ENCODE measurements at regions of chr4 and their contacts with region 1.

Region 1: GRCh38 chr4:37686373-37687193 is at the start of gene RELL1:
- DNase-seq: peak; percentile 98 to 99 (median 98)
- H3K4me3 ChIP-seq: peak within 1 kb of the TSS; percentile 18 to 72
- H3K4me3 Mint-ChIP-seq: peak within 1 kb of the TSS; percentile 91 to 98 (median 95)
- H3K27ac ChIP-seq: peak within 1 kb of the TSS; percentile 91
- H3K27ac Mint-ChIP-seq: peak within 1 kb of the TSS; percentile 97 to 99 (median 98)
- H3K4me1 ChIP-seq: peaks cover 41% of the 10 kb centered on the region
- H3K4me1 Mint-ChIP-seq: peaks cover 26 to 47% (median 35%) of the 10 kb centered on the region in 4 donors
- H3K27me3 ChIP-seq: no peaks in the 10 kb centered on the region
- H3K27me3 Mint-ChIP-seq: no peaks in the 10 kb centered on the region
- total RNA-seq, gene RELL1: 34.9 to 36.9 TPM

Region 2: DNA sequence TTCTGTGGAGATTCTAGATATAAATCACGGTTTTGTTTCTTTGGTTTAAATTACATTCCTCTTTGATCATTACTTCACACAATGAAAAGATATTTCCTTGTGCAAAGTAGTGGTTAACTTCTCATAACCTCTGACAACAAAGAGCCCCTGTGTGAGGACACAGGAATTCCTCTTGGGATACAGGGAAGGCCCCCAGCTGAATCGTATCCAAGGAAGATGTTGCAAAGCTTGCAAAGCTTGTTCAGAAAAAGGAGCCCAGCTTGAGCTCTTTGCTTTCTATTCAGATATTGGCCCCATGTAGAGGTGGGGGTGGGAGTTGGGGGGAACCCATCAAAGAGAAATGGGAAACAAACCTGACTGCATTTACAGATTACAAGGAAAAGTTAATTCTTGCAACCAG is 146.1 kb before region 1 on chr4:
- CTCF ChIA-PET with region 1: no interaction called
- POLR2A ChIA-PET with region 1: no interaction called
- intact Hi-C with region 1: no loop called
- DNase-seq: no peak
- H3K4me3 ChIP-seq: no peak overlapping the region
- H3K4me3 Mint-ChIP-seq: no peak overlapping the region
- H3K27ac ChIP-seq: no peak overlapping the region
- H3K27ac Mint-ChIP-seq: no peak overlapping the region
- H3K4me1 ChIP-seq: no peaks in the 10 kb centered on the region
- H3K4me1 Mint-ChIP-seq: no peaks in the 10 kb centered on the region
- H3K27me3 ChIP-seq: no peaks in the 10 kb centered on the region
- H3K27me3 Mint-ChIP-seq: peaks cover 0 to 2% of the 10 kb centered on the region in 2 donors

Region 3: DNA sequence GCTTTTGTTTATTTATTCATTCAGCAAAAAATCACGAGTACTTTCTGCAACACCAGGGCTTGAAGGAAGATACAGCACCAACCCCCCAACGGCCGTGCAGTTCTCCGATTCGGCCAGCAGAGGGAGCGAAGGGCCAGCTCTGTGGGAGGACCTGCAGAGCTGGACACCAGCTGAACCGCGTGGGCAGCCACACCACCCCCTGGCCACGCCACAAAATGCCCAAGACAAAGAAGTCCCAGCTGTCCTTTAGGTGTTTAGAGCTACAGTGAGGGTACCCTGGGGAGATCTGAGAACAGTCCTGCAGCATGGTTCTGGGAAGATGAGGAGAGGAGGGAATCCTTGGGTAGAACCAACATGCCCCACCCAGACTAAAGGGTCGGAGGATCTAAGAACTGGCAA is 83.5 kb before region 1 on chr4:
- CTCF ChIA-PET with region 1: interaction called, 6 read pairs
- POLR2A ChIA-PET with region 1: no interaction called
- intact Hi-C with region 1: loop called (anchors 2 kb)
- DNase-seq: peak; percentile 54 to 69 (median 58)
- H3K4me3 ChIP-seq: no peak overlapping the region
- H3K4me3 Mint-ChIP-seq: peak overlapping the region in 1 of 8 donors; percentile 23
- H3K27ac ChIP-seq: no peak overlapping the region
- H3K27ac Mint-ChIP-seq: peak overlapping the region in 3 of 7 donors; percentile 63 to 77 (median 73)
- H3K4me1 ChIP-seq: peaks cover 4% of the 10 kb centered on the region
- H3K4me1 Mint-ChIP-seq: peaks cover 4 to 11% (median 6%) of the 10 kb centered on the region in 4 donors
- H3K27me3 ChIP-seq: no peaks in the 10 kb centered on the region
- H3K27me3 Mint-ChIP-seq: no peaks in the 10 kb centered on the region

Region 4: DNA sequence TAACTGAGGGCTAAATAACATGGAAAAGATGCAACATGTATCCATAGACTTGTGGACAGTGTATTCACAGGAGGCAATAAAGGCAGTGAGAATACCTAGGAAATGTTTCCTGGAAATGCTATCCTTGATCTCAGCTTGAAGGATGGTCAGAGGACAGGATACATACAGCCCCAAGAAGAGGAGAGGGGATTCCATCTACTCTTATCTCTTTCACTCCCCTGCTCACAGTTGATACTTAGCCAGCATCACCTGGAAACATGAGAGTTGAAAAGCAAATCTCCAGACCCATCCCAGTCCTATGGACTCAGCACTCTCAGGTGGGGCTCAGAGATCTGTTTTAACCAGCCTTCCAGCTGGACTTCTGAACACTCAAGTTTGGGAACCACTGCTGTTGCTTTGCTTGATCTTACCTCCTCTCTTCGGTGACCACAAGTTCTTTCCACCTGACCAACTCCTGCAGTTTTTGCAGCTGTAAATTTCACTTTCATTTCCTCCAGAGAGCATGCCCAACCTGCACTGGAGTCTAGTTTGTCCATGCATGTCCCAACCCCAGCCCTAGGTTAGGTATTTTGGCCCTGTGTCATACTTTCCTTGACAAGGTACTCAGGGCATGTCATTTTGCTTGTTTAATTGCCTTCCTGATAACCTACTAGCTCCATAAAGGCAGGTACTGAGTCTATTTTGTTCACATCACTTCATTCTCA is 10.8 kb before region 1 on chr4:
- CTCF ChIA-PET with region 1: interaction called, 3 read pairs
- POLR2A ChIA-PET with region 1: interaction called, 6 read pairs
- intact Hi-C with region 1: loop called (anchors 1 kb)
- DNase-seq: peak in 3 of 5 donors; percentile 12 to 39 (median 23)
- H3K4me3 ChIP-seq: no peak overlapping the region
- H3K4me3 Mint-ChIP-seq: peak overlapping the region; percentile 21 to 92 (median 66)
- H3K27ac ChIP-seq: no peak overlapping the region
- H3K27ac Mint-ChIP-seq: peak overlapping the region in 4 of 7 donors; percentile 19 to 79 (median 44)
- H3K4me1 ChIP-seq: peaks cover 33% of the 10 kb centered on the region
- H3K4me1 Mint-ChIP-seq: peaks cover 37 to 78% (median 60%) of the 10 kb centered on the region in 4 donors
- H3K27me3 ChIP-seq: no peaks in the 10 kb centered on the region
- H3K27me3 Mint-ChIP-seq: no peaks in the 10 kb centered on the region

Region 5: DNA sequence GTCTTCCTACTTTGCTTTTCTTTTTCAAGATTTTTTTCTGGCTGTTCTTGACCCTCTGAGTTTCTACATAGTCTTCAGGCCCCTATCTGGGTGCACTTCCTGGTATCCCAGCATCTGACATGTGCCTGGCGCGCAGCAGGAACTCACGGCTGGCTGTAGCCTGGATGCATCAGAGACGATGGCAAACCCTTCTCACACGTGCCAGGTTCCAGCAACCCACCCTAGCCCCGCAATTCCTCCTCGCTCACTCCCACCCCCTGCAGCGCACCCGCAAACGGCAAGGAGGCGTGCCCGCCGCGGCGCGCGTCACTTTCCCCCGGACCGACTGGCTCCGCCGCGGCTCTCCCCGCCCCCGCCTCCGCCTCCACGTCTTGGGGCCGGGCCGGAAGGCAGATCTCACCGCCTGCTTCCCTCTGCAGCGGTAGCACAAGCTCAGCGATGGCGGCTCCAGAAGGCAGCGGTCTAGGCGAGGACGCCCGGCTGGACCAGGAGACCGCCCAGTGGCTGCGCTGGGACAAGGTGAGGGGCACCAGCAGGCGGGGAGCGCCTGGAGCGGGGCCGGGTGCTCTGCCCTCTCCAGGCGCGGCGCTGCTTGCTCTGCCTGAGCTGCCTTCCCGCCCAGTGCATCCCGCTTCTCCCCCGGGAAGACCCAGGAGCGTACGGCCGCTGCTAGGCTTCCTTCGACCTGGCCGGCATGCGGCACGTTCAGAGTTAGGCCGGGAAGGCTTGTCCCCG is 139.9 kb after region 1 on chr4 and contains the start of gene PGM2:
- CTCF ChIA-PET with region 1: interaction called, 4 read pairs
- POLR2A ChIA-PET with region 1: no interaction called
- intact Hi-C with region 1: loop called (anchors 1 kb)
- DNase-seq: peak; percentile 86 to 90 (median 88)
- H3K4me3 ChIP-seq: peak within 1 kb of the TSS; percentile 97 to 98
- H3K4me3 Mint-ChIP-seq: peak within 1 kb of the TSS; percentile 93 to 99 (median 97)
- H3K27ac ChIP-seq: peak within 1 kb of the TSS; percentile 69
- H3K27ac Mint-ChIP-seq: peak within 1 kb of the TSS; percentile 66 to 99 (median 96)
- H3K4me1 ChIP-seq: peaks cover 23% of the 10 kb centered on the region
- H3K4me1 Mint-ChIP-seq: peaks cover 23 to 56% (median 37%) of the 10 kb centered on the region in 4 donors
- H3K27me3 ChIP-seq: no peaks in the 10 kb centered on the region
- H3K27me3 Mint-ChIP-seq: no peaks in the 10 kb centered on the region
- total RNA-seq, gene PGM2: 16.9 to 18.4 TPM

Region 6: GRCh38 chr4:37977471-37978247 is 291.1 kb after region 1 on chr4:
- CTCF ChIA-PET with region 1: no interaction called
- POLR2A ChIA-PET with region 1: no interaction called
- intact Hi-C with region 1: loop called (anchors 2 kb)
- DNase-seq: peak; percentile 74 to 78 (median 77)
- H3K4me3 ChIP-seq: peak overlapping the region; percentile 67 to 69
- H3K4me3 Mint-ChIP-seq: peak overlapping the region; percentile 86 to 92 (median 88)
- H3K27ac ChIP-seq: peak overlapping the region; percentile 75
- H3K27ac Mint-ChIP-seq: peak overlapping the region; percentile 84 to 91 (median 88)
- H3K4me1 ChIP-seq: peaks cover 22% of the 10 kb centered on the region
- H3K4me1 Mint-ChIP-seq: peaks cover 16 to 40% (median 24%) of the 10 kb centered on the region in 4 donors
- H3K27me3 ChIP-seq: no peaks in the 10 kb centered on the region
- H3K27me3 Mint-ChIP-seq: no peaks in the 10 kb centered on the region

Region 7: DNA sequence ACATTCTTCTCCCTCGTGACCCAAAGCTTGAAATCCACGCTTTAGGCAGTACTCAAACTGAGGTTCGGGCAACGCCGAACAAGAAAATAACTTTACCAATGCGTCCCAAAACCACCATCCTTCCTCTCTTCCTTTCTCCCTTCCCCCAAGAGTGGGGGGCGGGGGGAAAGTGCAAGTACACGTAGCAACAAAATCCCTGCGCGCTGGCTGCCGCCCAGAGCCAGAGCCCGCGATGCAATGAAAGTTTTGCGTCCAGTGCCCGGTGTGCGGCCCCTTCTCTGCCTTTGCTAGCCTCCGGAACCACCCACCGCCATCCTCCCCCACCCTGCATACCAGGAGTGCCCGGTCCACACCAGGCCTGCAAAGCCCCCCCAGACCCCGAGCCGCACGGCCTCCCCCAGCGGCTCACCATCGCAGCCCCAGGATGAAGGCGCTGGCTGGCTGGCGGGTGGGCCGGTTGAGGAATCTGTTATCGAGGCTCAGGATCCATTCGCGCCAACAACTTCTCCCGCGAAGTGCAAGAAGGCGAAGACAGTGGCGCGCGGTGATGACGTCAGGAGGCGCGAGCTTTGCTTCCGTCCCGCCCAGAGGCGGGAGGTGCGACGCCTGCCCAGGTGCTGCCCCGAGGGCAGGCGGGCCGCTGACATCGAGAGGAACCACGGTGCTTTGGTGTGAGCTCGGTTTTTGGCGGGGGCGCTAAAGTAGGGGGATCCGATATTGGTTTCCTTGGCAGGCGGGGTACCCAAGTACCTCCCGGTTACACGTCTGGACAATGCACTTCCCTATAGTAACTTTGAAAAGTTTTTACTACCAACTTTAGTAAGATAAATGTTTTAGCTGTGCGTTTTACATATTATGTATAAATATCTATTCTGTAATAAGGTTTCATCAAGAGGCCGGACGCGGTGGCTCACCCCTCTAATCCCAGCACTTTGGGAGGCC is 1679.5 kb after region 1 on chr4 and contains the start of gene RFC1:
- CTCF ChIA-PET with region 1: no interaction called
- POLR2A ChIA-PET with region 1: no interaction called
- intact Hi-C with region 1: loop called (anchors 5 kb)
- DNase-seq: peak; percentile 89 to 94 (median 90)
- H3K4me3 ChIP-seq: peak within 1 kb of the TSS; percentile 85
- H3K4me3 Mint-ChIP-seq: peak within 1 kb of the TSS; percentile 90 to 96 (median 93)
- H3K27ac ChIP-seq: peak within 1 kb of the TSS; percentile 83
- H3K27ac Mint-ChIP-seq: peak within 1 kb of the TSS; percentile 90 to 97 (median 94)
- H3K4me1 ChIP-seq: peaks cover 38% of the 10 kb centered on the region
- H3K4me1 Mint-ChIP-seq: peaks cover 22 to 44% (median 29%) of the 10 kb centered on the region in 4 donors
- H3K27me3 ChIP-seq: no peaks in the 10 kb centered on the region
- H3K27me3 Mint-ChIP-seq: no peaks in the 10 kb centered on the region
- total RNA-seq, gene RFC1: 62.5 to 70.6 TPM

Measured in CD4-positive, alpha-beta memory T cell (primary cell).